CD8-positive, alpha-beta T cell (primary cell): ENCODE measurements at regions of chr12 and their contacts with region 1.

Region 1: GRCh38 chr12:53159195-53159839 is 21.2 kb upstream of the ZNF740 start:
- DNase-seq: peak; percentile 81 to 94 (median 89)
- ATAC-seq: peak; percentile 100
- H3K4me3 ChIP-seq: no peak overlapping the region
- H3K4me3 Mint-ChIP-seq: no peak overlapping the region
- H3K27ac ChIP-seq: no peak overlapping the region
- H3K27ac Mint-ChIP-seq: peak overlapping the region; percentile 1
- H3K4me1 ChIP-seq: peaks cover 8% of the 10 kb centered on the region
- H3K4me1 Mint-ChIP-seq: peaks cover 6% of the 10 kb centered on the region
- H3K27me3 ChIP-seq: no peaks in the 10 kb centered on the region
- H3K27me3 Mint-ChIP-seq: no peaks in the 10 kb centered on the region
- CTCF ChIP-seq: peak; percentile 97

Region 2: DNA sequence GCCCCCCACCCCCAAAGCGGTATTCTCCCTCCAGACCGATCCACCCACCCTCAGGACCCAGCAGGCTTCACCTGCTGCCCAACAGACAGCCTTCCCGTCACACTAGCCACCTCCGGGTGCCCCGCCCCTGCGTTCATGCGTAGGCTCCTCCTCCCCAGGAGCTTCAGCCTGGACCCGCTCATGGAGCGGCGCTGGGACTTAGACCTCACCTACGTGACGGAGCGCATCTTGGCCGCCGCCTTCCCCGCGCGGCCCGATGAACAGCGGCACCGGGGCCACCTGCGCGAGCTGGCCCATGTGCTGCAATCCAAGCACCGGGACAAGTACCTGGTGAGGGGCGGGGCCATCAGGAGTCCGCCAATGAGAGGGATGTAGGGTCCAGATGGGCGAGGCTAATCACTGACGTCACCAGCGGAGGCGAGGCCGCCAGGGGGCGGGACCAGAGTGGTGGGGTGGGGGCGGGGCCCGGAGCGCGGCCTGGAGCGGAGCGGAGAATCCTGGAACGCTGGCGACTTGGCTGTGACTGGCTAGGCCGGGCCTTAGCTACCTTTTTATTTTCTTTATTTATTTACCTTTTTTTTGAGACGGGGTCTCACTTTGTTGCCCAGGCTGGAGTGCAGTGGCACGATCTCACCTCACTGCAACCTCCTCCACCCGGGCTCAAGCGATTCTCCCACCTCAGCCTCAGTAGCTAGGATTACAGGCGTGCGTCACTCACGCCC is 105.0 kb before region 1 on chr12:
- CTCF ChIA-PET with region 1: no interaction called
- POLR2A ChIA-PET with region 1: no interaction called
- intact Hi-C with region 1: no loop called
- DNase-seq: peak; percentile 81 to 97 (median 93)
- ATAC-seq: peak; percentile 92
- H3K4me3 ChIP-seq: peak overlapping the region; percentile 82 to 94
- H3K4me3 Mint-ChIP-seq: peak overlapping the region; percentile 94
- H3K27ac ChIP-seq: peak overlapping the region; percentile 51 to 57
- H3K27ac Mint-ChIP-seq: peak overlapping the region; percentile 91
- H3K4me1 ChIP-seq: peaks cover 7% of the 10 kb centered on the region
- H3K4me1 Mint-ChIP-seq: peaks cover 13% of the 10 kb centered on the region
- H3K27me3 ChIP-seq: no peaks in the 10 kb centered on the region
- H3K27me3 Mint-ChIP-seq: no peaks in the 10 kb centered on the region
- CTCF ChIP-seq: no peak

Region 3: DNA sequence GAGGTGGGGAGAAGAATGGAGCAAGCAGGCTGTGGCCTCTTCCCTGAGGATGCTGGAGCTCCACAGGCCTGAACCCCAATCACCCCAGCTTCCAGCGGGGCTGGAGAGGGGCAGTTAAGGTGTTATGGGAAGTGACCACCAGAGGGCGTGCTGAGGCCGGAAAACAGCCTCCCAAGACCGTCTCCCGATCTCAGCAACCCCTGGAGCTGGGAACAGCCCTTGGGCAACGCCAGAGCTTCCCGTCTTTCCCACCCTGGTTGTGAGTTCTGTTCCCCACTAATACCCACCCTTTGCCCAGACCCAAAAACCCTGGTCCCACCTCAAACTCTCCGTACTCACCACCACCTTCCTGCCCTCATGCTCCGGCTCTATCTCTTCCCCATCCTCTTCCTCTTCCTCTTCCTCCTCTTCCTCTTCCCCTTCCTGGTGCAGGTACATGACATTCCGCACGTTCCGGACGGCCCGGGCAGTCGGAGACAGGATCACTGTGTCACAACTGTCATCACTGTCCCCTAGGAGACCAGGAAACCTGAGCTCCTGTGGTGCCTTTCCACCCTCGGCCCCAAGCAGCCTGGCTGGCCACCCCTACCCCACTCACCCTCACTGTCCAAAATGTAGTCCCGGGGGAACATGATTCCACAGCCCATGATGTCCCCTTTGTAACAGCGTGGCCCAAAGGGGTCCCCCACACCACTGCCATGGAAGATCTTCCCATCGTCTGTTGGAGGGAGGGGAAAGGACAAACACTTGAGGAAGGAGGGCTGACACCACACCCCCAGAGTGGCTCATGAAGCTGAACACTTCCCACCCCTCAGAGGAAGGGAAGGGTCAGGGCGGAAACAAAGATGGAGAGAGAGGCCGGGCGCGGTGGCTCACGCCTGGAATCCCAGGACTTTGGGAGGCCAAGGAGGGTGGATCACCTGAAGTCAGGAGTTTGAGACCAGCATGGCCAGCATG is 93.1 kb before region 1 on chr12:
- CTCF ChIA-PET with region 1: interaction called, 23 read pairs
- POLR2A ChIA-PET with region 1: no interaction called
- intact Hi-C with region 1: loop called in 1 of 2 experiments (anchors 1 kb)
- DNase-seq: peak; percentile 28 to 82 (median 73)
- ATAC-seq: peak; percentile 74
- H3K4me3 ChIP-seq: no peak overlapping the region
- H3K4me3 Mint-ChIP-seq: no peak overlapping the region
- H3K27ac ChIP-seq: no peak overlapping the region
- H3K27ac Mint-ChIP-seq: peak overlapping the region; percentile 34
- H3K4me1 ChIP-seq: no peaks in the 10 kb centered on the region
- H3K4me1 Mint-ChIP-seq: peaks cover 9% of the 10 kb centered on the region
- H3K27me3 ChIP-seq: no peaks in the 10 kb centered on the region
- H3K27me3 Mint-ChIP-seq: no peaks in the 10 kb centered on the region
- CTCF ChIP-seq: peak; percentile 80

Region 4: GRCh38 chr12:53200458-53201176 is 41.3 kb after region 1 on chr12:
- CTCF ChIA-PET with region 1: interaction called, 39 read pairs
- POLR2A ChIA-PET with region 1: interaction called, 3 read pairs
- intact Hi-C with region 1: loop called in 1 of 2 experiments (anchors 1 kb)
- DNase-seq: peak in 3 of 9 experiments; percentile 31 to 63 (median 49)
- ATAC-seq: peak; percentile 41
- H3K4me3 ChIP-seq: peak overlapping the region in 1 of 2 experiments; percentile 7
- H3K4me3 Mint-ChIP-seq: peak overlapping the region; percentile 73
- H3K27ac ChIP-seq: peak overlapping the region; percentile 14 to 30
- H3K27ac Mint-ChIP-seq: peak overlapping the region; percentile 93
- H3K4me1 ChIP-seq: peaks cover 89% of the 10 kb centered on the region
- H3K4me1 Mint-ChIP-seq: peaks cover 72% of the 10 kb centered on the region
- H3K27me3 ChIP-seq: no peaks in the 10 kb centered on the region
- H3K27me3 Mint-ChIP-seq: no peaks in the 10 kb centered on the region
- CTCF ChIP-seq: no peak

Region 5: GRCh38 chr12:53251477-53252348 is 92.4 kb after region 1 on chr12:
- CTCF ChIA-PET with region 1: interaction called, 7 read pairs
- POLR2A ChIA-PET with region 1: interaction called, 4 read pairs
- intact Hi-C with region 1: loop called in 1 of 2 experiments (anchors 5 kb)
- DNase-seq: peak; percentile 28 to 85 (median 71)
- ATAC-seq: peak; percentile 87
- H3K4me3 ChIP-seq: peak overlapping the region; percentile 71 to 86
- H3K4me3 Mint-ChIP-seq: peak overlapping the region; percentile 98
- H3K27ac ChIP-seq: peak overlapping the region; percentile 70 to 80
- H3K27ac Mint-ChIP-seq: peak overlapping the region; percentile 96
- H3K4me1 ChIP-seq: peaks cover 46% of the 10 kb centered on the region
- H3K4me1 Mint-ChIP-seq: peaks cover 50% of the 10 kb centered on the region
- H3K27me3 ChIP-seq: no peaks in the 10 kb centered on the region
- H3K27me3 Mint-ChIP-seq: no peaks in the 10 kb centered on the region
- CTCF ChIP-seq: peak; percentile 40

Region 6: GRCh38 chr12:53279283-53279869 is 120.1 kb after region 1 on chr12:
- CTCF ChIA-PET with region 1: interaction called, 14 read pairs
- POLR2A ChIA-PET with region 1: no interaction called
- intact Hi-C with region 1: no loop called
- DNase-seq: no peak
- ATAC-seq: no peak
- H3K4me3 ChIP-seq: no peak overlapping the region
- H3K4me3 Mint-ChIP-seq: no peak overlapping the region
- H3K27ac ChIP-seq: no peak overlapping the region
- H3K27ac Mint-ChIP-seq: no peak overlapping the region
- H3K4me1 ChIP-seq: no peaks in the 10 kb centered on the region
- H3K4me1 Mint-ChIP-seq: no peaks in the 10 kb centered on the region
- H3K27me3 ChIP-seq: no peaks in the 10 kb centered on the region
- H3K27me3 Mint-ChIP-seq: no peaks in the 10 kb centered on the region
- CTCF ChIP-seq: no peak

Region 7: DNA sequence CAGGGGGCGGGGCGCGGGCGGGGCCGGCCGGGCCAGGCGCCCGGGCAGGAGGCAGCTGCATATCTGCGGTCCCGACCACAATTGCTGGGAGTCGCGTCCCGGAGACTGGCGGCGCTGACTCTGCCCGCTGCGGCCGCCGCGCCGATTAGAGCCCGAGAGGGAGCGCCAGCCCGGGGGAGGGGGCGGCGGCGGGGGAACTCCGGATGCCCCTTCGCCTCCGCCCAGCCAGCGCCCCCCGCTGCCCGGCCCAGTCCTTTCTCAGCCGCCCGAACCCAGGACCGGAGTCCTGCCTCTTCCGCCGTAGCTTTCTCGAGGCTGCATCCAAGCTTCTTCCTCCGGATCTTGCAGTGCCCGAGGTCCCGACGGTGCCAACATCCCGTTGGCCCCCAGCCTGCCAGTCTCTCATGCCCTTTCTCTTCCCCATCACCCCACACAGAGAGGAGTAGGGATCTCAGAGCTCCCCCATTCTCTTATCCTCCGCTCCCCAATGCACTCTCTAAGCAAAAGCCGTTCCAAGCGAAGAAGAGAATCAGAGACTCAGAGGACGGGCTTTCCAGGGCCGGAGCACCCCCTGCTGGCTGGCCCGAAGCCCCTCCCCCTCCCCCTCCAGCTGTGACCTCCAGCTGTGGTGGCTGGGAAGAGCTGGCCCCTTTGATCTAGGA is 185.6 kb after region 1 on chr12:
- CTCF ChIA-PET with region 1: interaction called, 16 read pairs
- POLR2A ChIA-PET with region 1: no interaction called
- intact Hi-C with region 1: loop called (anchors 1 to 2 kb)
- DNase-seq: peak; percentile 44 to 85 (median 70)
- ATAC-seq: peak; percentile 85
- H3K4me3 ChIP-seq: peak overlapping the region; percentile 61 to 72
- H3K4me3 Mint-ChIP-seq: peak overlapping the region; percentile 93
- H3K27ac ChIP-seq: peak overlapping the region; percentile 27 to 47
- H3K27ac Mint-ChIP-seq: peak overlapping the region; percentile 77
- H3K4me1 ChIP-seq: peaks cover 16% of the 10 kb centered on the region
- H3K4me1 Mint-ChIP-seq: peaks cover 15% of the 10 kb centered on the region
- H3K27me3 ChIP-seq: no peaks in the 10 kb centered on the region
- H3K27me3 Mint-ChIP-seq: no peaks in the 10 kb centered on the region
- CTCF ChIP-seq: peak; percentile 58